CD8-positive, alpha-beta T cell (primary cell): ENCODE measurements at regions of chr22 and their contacts with region 1.

Region 1: DNA sequence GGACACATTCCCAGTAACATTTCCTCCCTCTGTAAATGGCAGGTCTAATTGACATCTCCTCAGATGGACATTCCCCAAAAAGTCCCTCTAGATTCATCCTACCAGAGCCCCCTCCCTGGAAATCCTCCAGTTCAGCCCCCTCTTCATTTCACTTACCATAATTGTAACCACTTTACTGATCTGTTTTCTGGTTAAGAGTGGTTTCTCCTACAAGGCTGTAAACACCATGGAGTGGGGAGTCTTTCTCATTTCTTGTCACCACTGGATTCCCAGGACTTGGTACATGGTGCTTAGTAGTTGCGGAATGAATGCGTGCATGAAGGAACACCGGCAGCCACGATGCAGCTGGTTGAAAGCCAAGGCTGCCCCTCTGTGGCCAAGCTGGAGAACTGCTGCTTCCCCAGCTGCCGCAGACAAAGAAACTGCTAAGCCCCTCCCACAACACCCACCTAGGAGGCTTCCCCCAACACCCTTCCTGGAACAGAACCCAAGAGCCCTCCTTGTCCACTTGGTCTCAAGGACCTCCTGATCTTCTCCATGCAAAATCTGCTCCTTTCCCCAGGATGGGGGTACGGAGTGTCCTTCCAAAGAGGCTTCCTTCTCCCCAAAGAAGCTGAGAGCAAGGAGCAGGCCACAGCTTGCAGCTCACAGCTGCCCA is 18.6 kb upstream of the SCARF2 start:
- DNase-seq: peak; percentile 48 to 90 (median 75)
- ATAC-seq: peak; percentile 100
- H3K4me3 ChIP-seq: no peak overlapping the region
- H3K4me3 Mint-ChIP-seq: no peak overlapping the region
- H3K27ac ChIP-seq: no peak overlapping the region
- H3K27ac Mint-ChIP-seq: peak overlapping the region; percentile 4
- H3K4me1 ChIP-seq: peaks cover 16% of the 10 kb centered on the region
- H3K4me1 Mint-ChIP-seq: peaks cover 34% of the 10 kb centered on the region
- H3K27me3 ChIP-seq: no peaks in the 10 kb centered on the region
- H3K27me3 Mint-ChIP-seq: no peaks in the 10 kb centered on the region
- CTCF ChIP-seq: peak; percentile 87

Region 2: DNA sequence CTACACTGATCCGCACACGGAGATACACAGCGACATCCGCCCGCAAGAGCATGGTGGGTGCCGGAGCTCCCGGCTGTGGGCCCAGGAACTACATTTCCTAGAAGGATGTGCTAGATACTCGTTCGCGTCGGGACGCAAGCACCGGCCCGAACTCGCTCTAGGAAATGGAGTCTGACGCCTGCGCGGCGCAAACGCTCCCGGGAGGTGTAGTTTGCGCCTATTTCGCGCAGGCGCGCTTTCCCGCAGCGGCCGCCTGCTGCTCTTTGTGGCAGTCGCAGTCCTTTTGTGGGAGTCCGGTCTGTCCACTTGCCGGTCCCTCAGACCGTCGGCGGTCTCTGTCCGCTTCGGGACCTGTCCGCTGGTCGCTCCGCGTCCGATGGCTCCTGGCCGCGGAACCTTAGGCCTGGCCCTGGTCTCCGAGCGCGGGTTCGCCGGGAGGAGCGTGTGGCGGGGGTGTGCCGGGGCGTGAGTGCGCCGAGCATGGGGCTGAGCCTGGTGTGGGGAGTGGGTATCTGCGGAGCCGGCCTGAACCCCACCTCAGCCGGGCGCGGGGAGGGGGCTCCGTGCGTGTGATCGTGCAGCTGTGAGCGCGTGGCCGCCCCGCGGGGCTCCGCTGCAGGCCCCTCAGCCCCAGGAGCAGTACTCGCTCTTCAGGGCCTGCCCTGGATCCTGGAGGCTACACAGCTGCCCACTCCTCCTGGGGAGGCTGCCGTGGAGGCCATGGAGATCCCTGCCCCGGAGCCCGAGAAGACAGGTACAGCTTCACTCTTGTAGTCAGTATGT is 62.1 kb before region 1 on chr22 and contains the start of gene ZNF74:
- CTCF ChIA-PET with region 1: no interaction called
- POLR2A ChIA-PET with region 1: no interaction called
- intact Hi-C with region 1: loop called in 1 of 2 experiments (anchors 1 kb)
- DNase-seq: peak; percentile 68 to 95 (median 84)
- ATAC-seq: peak; percentile 98
- H3K4me3 ChIP-seq: peak within 1 kb of the TSS; percentile 69 to 86
- H3K4me3 Mint-ChIP-seq: peak within 1 kb of the TSS; percentile 87
- H3K27ac ChIP-seq: peak within 1 kb of the TSS; percentile 46 to 79
- H3K27ac Mint-ChIP-seq: peak within 1 kb of the TSS; percentile 95
- H3K4me1 ChIP-seq: peaks cover 21% of the 10 kb centered on the region
- H3K4me1 Mint-ChIP-seq: peaks cover 37% of the 10 kb centered on the region
- H3K27me3 ChIP-seq: no peaks in the 10 kb centered on the region
- H3K27me3 Mint-ChIP-seq: no peaks in the 10 kb centered on the region
- CTCF ChIP-seq: no peak
- total RNA-seq, gene ZNF74: 1.9 to 2.1 TPM

Region 3: DNA sequence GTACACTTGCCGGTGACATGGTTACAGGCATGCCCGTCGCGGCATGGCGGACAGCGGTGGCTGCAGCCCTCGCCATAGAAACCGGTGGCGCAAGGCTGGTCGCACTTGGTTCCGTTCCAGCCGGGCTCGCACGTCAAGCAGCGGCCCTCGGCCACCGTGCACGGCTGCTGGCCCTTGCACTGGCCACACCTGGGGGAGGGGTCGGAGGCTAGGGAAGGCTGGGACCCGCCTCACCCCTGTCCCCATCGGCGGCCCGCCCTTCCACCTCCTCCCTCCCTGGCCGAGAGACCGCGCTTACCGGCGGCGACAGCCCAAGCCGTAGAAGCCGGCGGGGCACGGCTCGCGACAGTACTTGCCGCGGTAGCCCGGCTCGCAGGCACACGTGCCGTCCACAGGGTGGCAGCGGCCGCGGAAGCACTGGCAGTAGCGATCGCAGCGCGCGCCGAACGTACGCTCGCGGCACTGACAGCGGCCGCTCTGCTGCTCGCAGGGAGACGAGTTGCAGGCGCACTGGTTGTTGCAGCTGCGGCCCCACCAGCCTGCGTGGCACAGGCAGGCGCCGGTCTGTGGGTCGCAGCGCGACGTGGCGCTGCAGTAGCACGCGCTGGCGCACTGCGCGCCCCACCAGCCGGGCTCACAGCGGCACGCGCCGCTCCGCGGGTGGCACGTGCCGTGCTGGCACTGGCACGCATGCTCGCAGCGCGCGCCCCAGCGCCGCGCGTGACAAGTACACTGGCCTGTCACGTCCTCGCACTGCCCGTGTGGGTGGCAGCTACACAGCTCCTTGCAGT is 25.3 kb before region 1 on chr22:
- CTCF ChIA-PET with region 1: interaction called, 12 read pairs
- POLR2A ChIA-PET with region 1: interaction called, 3 read pairs
- intact Hi-C with region 1: loop called in 1 of 2 experiments (anchors 1 kb)
- DNase-seq: peak; percentile 33 to 81 (median 62)
- ATAC-seq: peak; percentile 58
- H3K4me3 ChIP-seq: peak overlapping the region; percentile 60 to 67
- H3K4me3 Mint-ChIP-seq: peak overlapping the region; percentile 83
- H3K27ac ChIP-seq: no peak overlapping the region
- H3K27ac Mint-ChIP-seq: no peak overlapping the region
- H3K4me1 ChIP-seq: peaks cover 35% of the 10 kb centered on the region
- H3K4me1 Mint-ChIP-seq: peaks cover 35% of the 10 kb centered on the region
- H3K27me3 ChIP-seq: peaks cover 24 to 29% of the 10 kb centered on the region in 2 experiments
- H3K27me3 Mint-ChIP-seq: peaks cover 42% of the 10 kb centered on the region
- CTCF ChIP-seq: peak; percentile 18

Region 4: DNA sequence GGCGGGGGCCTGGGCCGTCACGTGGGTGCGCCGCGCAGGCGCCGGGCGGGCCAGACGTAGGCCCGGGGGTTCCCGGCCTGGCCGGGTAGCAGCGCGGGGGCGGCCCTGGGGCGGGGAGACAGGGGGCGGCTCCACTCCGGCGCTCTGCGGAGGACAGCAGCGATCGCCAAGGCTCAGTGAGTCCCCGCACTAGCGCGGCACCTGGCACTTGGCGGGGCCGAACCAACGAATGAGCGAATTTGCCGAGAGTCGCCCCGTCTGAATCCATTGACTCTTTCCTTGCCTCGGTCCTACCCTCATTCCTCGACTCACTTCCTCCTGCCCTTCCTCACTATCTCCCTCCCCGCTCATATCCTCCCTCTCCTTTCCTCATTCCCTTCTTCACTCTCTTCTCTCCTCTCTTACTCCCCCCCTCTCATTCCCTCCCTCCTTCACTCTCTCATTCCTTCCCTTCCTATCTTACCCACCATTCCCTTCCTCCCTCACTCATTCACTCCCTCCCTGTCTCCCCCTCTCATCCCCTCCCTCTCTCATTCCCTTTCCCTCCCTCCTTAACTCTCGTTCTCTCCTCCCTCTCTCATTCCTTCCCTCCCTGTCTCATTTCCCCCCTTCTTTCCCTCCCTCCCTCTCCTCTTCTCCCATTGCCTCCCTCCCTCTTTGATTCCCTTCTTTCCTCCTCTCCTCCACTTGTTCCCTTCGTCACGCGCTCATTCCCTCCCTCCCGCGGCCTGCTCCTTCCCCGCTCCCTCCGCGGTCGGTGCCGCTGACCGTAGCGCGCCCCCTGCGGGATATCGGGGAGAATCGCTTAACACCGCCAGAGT is 39.9 kb after region 1 on chr22:
- CTCF ChIA-PET with region 1: interaction called, 8 read pairs
- POLR2A ChIA-PET with region 1: interaction called, 4 read pairs
- intact Hi-C with region 1: loop called in 1 of 2 experiments (anchors 1 kb)
- DNase-seq: peak; percentile 83 to 96 (median 91)
- ATAC-seq: peak; percentile 96
- H3K4me3 ChIP-seq: peak overlapping the region; percentile 75 to 83
- H3K4me3 Mint-ChIP-seq: peak overlapping the region; percentile 89
- H3K27ac ChIP-seq: peak overlapping the region; percentile 61 to 98
- H3K27ac Mint-ChIP-seq: peak overlapping the region; percentile 91
- H3K4me1 ChIP-seq: peaks cover 42% of the 10 kb centered on the region
- H3K4me1 Mint-ChIP-seq: peaks cover 41% of the 10 kb centered on the region
- H3K27me3 ChIP-seq: no peaks in the 10 kb centered on the region
- H3K27me3 Mint-ChIP-seq: no peaks in the 10 kb centered on the region
- CTCF ChIP-seq: peak; percentile 95

Region 5: GRCh38 chr22:20647586-20648305 is 191.6 kb after region 1 on chr22:
- CTCF ChIA-PET with region 1: no interaction called
- POLR2A ChIA-PET with region 1: no interaction called
- intact Hi-C with region 1: no loop called
- DNase-seq: peak in 1 of 9 experiments; percentile 19
- ATAC-seq: no peak
- H3K4me3 ChIP-seq: no peak overlapping the region
- H3K4me3 Mint-ChIP-seq: no peak overlapping the region
- H3K27ac ChIP-seq: no peak overlapping the region
- H3K27ac Mint-ChIP-seq: no peak overlapping the region
- H3K4me1 ChIP-seq: no peaks in the 10 kb centered on the region
- H3K4me1 Mint-ChIP-seq: no peaks in the 10 kb centered on the region
- H3K27me3 ChIP-seq: no peaks in the 10 kb centered on the region
- H3K27me3 Mint-ChIP-seq: no peaks in the 10 kb centered on the region
- CTCF ChIP-seq: no peak

Region 6: GRCh38 chr22:21001560-21002325 is 545.5 kb after region 1 on chr22 and contains the start of gene THAP7:
- CTCF ChIA-PET with region 1: no interaction called
- POLR2A ChIA-PET with region 1: no interaction called
- intact Hi-C with region 1: no loop called
- DNase-seq: peak; percentile 90 to 99 (median 97)
- ATAC-seq: peak; percentile 86
- H3K4me3 ChIP-seq: peak within 1 kb of the TSS; percentile 81 to 82
- H3K4me3 Mint-ChIP-seq: peak within 1 kb of the TSS; percentile 91
- H3K27ac ChIP-seq: peak within 1 kb of the TSS; percentile 93 to 100
- H3K27ac Mint-ChIP-seq: peak within 1 kb of the TSS; percentile 99
- H3K4me1 ChIP-seq: peaks cover 38% of the 10 kb centered on the region
- H3K4me1 Mint-ChIP-seq: peaks cover 29% of the 10 kb centered on the region
- H3K27me3 ChIP-seq: no peaks in the 10 kb centered on the region
- H3K27me3 Mint-ChIP-seq: no peaks in the 10 kb centered on the region
- CTCF ChIP-seq: no peak
- total RNA-seq, gene THAP7: 71.2 to 73.6 TPM